ENCODE measurements at regions of chr15 and their contacts with region 1.

Region 1: GRCh38 chr15:51380999-51381795 is 39.7 kb downstream of the GLDN start:
- DNase-seq: peak; percentile 61
- ATAC-seq: peak; percentile 90
- H3K4me3 Mint-ChIP-seq: no peak overlapping the region
- H3K27ac Mint-ChIP-seq: no peak overlapping the region
- H3K4me1 Mint-ChIP-seq: no peaks in the 10 kb centered on the region
- H3K27me3 Mint-ChIP-seq: peaks cover 10% of the 10 kb centered on the region
- CTCF ChIP-seq: peak; percentile 68

Region 2: GRCh38 chr15:51281368-51281967 is 99.7 kb before region 1 on chr15:
- CTCF ChIA-PET with region 1: interaction called, 11 read pairs
- POLR2A ChIA-PET with region 1: no interaction called
- intact Hi-C with region 1: no loop called
- DNase-seq: peak; percentile 47
- ATAC-seq: no peak
- H3K4me3 Mint-ChIP-seq: no peak overlapping the region
- H3K27ac Mint-ChIP-seq: no peak overlapping the region
- H3K4me1 Mint-ChIP-seq: no peaks in the 10 kb centered on the region
- H3K27me3 Mint-ChIP-seq: peaks cover 7% of the 10 kb centered on the region
- CTCF ChIP-seq: no peak

Region 3: GRCh38 chr15:51401872-51402517 is 20.8 kb after region 1 on chr15:
- CTCF ChIA-PET with region 1: no interaction called
- POLR2A ChIA-PET with region 1: no interaction called
- intact Hi-C with region 1: no loop called
- DNase-seq: no peak
- ATAC-seq: no peak
- H3K4me3 Mint-ChIP-seq: no peak overlapping the region
- H3K27ac Mint-ChIP-seq: no peak overlapping the region
- H3K4me1 Mint-ChIP-seq: no peaks in the 10 kb centered on the region
- H3K27me3 Mint-ChIP-seq: peaks cover 18% of the 10 kb centered on the region
- CTCF ChIP-seq: no peak

Region 4: DNA sequence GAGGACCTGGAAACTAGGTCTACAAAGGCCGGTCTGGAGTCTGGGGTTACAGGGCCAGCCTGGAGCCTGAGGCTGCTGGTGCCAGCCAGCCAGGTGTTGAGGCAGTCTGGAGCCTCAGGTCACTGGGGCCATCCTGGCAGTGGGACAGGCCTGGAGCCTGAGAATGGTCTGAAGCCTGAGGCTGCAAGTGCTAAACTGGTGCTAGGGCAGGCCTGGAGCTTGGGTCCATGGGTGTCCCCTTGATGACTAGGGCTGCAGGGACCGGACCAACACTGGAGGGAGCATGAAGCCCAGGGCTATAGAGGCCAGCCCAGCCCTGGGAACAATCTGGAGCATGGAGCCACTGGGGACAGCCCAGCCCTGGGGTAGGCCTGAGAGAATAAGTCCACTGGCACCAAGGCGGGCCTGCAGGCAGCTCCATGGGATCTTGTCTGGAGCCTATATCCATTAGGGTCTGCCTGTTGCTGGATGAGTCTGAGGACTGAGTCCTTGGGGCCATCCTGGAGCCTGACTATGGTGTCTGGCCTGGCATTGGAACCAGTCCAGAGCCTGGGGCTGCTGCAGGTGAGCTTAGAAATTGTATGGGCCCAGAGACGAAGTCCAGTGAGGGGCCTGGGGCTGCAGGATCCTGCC is 62.2 kb after region 1 on chr15:
- CTCF ChIA-PET with region 1: no interaction called
- POLR2A ChIA-PET with region 1: no interaction called
- intact Hi-C with region 1: no loop called
- DNase-seq: no peak
- ATAC-seq: no peak
- H3K4me3 Mint-ChIP-seq: no peak overlapping the region
- H3K27ac Mint-ChIP-seq: no peak overlapping the region
- H3K4me1 Mint-ChIP-seq: peaks cover 5% of the 10 kb centered on the region
- H3K27me3 Mint-ChIP-seq: peaks cover 2% of the 10 kb centered on the region
- CTCF ChIP-seq: no peak

Region 5: DNA sequence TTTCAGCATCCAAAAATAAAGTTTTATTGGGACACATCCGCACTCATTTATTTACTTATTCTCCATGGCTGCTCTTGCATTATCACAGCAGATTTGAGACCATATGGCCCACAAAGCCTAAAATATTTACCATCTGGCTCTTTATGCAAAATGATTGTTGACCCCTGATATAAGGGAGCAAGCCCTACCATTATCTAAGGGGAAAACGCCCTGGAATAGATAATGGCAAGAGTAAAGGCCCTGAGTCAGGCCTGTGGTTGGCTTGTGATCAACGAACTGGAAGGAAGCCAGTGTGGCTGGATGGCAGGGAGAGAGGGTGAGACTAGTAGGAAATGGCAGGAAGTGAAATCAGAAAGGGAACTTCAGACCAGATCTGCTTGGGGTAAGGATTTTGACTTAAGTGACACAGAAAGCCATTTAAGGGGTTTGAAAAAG is 265.9 kb after region 1 on chr15:
- CTCF ChIA-PET with region 1: no interaction called
- POLR2A ChIA-PET with region 1: no interaction called
- intact Hi-C with region 1: no loop called
- DNase-seq: no peak
- ATAC-seq: no peak
- H3K4me3 Mint-ChIP-seq: no peak overlapping the region
- H3K27ac Mint-ChIP-seq: no peak overlapping the region
- H3K4me1 Mint-ChIP-seq: no peaks in the 10 kb centered on the region
- H3K27me3 Mint-ChIP-seq: no peaks in the 10 kb centered on the region
- CTCF ChIP-seq: no peak